Left ventricle myocardium inferior (tissue), 1 donor: ENCODE measurements at regions of chr2 and their contacts with region 1.

Region 1: GRCh38 chr2:197777823-197778407 is 7.2 kb downstream of the BOLL start:
- DNase-seq: no peak
- H3K4me3 ChIP-seq: no peak overlapping the region
- H3K27ac ChIP-seq: no peak overlapping the region
- H3K4me1 ChIP-seq: no peaks in the 10 kb centered on the region
- H3K27me3 ChIP-seq: no peaks in the 10 kb centered on the region
- CTCF ChIP-seq: peak; percentile 80

Region 2: DNA sequence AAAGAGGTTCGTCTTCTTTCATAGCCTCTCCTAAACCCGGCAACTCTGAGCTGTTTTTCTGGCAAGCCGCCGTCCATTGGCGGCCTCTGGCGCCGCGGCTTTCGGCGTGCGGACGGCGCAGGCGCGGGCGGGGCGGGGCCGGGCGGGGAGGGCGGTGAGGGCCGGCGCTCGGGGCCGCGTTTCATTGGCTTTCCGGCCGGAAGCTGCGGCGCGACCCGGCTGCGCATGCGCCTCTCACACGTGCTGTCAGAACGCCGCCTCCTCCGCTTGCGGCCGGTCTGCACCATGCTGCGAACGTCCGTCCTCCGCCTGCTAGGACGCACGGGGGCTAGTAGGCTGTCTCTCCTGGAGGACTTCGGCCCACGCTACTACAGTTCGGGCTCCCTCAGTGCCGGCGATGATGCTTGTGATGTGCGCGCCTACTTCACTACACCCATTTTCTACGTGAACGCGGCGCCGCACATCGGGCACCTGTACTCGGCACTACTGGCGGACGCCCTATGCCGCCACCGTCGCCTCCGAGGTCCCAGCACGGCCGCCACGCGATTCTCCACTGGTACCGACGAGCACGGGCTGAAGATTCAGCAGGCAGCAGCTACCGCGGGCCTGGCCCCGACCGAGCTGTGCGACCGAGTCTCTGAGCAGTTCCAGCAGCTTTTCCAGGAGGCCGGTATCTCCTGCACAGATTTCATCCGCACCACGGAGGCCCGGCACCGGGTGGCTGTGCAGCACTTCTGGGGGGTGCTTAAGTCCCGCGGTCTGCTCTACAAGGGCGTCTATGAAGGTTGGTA is 72.6 kb before region 1 on chr2 and contains the start of gene MARS2:
- intact Hi-C with region 1: loop called (anchors 5 kb)
- DNase-seq: peak; percentile 95
- H3K4me3 ChIP-seq: peak within 1 kb of the TSS; percentile 84
- H3K27ac ChIP-seq: peak within 1 kb of the TSS; percentile 90
- H3K4me1 ChIP-seq: peaks cover 48% of the 10 kb centered on the region
- H3K27me3 ChIP-seq: no peaks in the 10 kb centered on the region
- CTCF ChIP-seq: no peak
- total RNA-seq, gene MARS2: 7.2 TPM

Region 3: GRCh38 chr2:197813093-197813787 is 35.3 kb after region 1 on chr2:
- intact Hi-C with region 1: no loop called
- DNase-seq: no peak
- H3K4me3 ChIP-seq: no peak overlapping the region
- H3K27ac ChIP-seq: no peak overlapping the region
- H3K4me1 ChIP-seq: peaks cover 57% of the 10 kb centered on the region
- H3K27me3 ChIP-seq: no peaks in the 10 kb centered on the region
- CTCF ChIP-seq: peak; percentile 62